GM12878 (cell line): ENCODE measurements at regions of chr18 and their contacts with region 1.

Region 1: DNA sequence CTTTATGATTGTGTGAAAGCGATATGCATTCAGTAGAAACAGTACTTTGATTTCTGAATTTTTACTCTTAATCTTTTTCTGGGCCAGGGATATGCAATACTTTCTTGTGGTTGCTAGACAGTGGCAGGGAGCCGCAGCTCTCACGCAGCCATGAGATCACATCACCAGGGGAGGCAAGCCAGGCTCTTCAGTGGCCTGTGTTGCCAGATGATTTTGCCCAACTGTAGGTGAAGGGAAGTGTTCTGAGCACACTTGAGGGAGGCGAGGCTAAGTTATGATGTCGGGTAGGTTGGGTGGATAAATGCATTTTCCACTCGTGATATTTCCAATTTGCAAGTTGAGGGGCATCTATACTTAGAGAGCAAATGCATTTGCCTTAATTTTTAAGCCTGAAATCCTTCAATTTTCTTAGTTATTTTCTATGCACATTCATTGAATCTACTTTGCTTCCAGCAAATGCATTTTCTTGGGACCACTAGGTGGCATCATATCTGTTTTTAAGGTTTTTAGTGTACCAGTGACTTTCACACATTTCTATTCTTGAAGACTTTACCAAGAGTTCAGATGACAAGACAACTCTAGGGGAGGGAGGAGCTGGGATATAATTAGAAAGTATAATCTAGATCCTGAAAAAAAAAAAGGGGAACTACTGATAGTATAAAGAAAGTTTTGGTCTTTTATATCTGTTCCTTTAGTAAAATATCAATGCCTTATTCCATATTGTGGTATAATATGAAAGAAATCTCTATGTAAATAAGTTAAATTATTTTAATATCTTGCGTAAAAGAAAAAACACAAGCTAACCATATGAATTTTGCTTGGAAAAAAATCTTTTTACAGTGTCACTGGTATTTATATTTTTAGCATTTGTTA is 643.3 kb downstream of the SOCS6 start:
- DNase-seq: no peak
- ATAC-seq: peak; percentile 47; the same call in 1 of the 3 replicates
- H3K4me3 ChIP-seq: no peak overlapping the region
- H3K27ac ChIP-seq: no peak overlapping the region
- H3K4me1 ChIP-seq: no peaks in the 10 kb centered on the region
- H3K27me3 ChIP-seq: no peaks in the 10 kb centered on the region
- CTCF ChIP-seq: peak; percentile 27 to 55 (median 52); a peak in 5 of 6 replicates
- EP300 ChIP-seq: no peak
- POLR2A ChIP-seq: no peak
- RAD21 ChIP-seq: peak; percentile 60

Region 2: DNA sequence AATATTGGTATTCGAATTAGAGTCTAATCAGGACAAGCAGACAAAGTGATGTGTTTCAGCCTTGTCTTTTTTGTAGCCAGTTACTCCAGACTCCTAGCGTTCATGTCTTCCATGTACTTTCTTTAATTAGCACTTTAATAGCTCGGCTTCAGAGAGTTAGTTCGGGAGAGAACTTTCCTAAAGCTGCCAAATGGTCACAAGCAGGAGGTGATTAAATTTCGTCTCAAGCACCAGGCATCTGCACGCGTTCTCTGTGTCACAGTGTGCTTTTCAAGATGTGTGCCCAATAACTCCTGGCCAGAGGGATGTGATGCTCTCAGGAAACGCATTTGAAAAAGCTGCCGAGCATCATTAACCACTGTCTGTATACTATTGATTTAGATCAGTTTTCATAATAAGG is 147.4 kb after region 1 on chr18:
- CTCF ChIA-PET with region 1: no interaction called
- POLR2A ChIA-PET with region 1: no interaction called
- RAD21 ChIA-PET with region 1: no interaction called
- SMC1A ChIA-PET with region 1: no interaction called
- in situ Hi-C with region 1: no loop called
- intact Hi-C with region 1: loop called (anchors 5 kb)
- DNase-seq: no peak
- ATAC-seq: no peak
- H3K4me3 ChIP-seq: no peak overlapping the region
- H3K27ac ChIP-seq: no peak overlapping the region
- H3K4me1 ChIP-seq: no peaks in the 10 kb centered on the region
- H3K27me3 ChIP-seq: no peaks in the 10 kb centered on the region
- CTCF ChIP-seq: no peak
- EP300 ChIP-seq: no peak
- POLR2A ChIP-seq: no peak
- RAD21 ChIP-seq: no peak

Region 3: DNA sequence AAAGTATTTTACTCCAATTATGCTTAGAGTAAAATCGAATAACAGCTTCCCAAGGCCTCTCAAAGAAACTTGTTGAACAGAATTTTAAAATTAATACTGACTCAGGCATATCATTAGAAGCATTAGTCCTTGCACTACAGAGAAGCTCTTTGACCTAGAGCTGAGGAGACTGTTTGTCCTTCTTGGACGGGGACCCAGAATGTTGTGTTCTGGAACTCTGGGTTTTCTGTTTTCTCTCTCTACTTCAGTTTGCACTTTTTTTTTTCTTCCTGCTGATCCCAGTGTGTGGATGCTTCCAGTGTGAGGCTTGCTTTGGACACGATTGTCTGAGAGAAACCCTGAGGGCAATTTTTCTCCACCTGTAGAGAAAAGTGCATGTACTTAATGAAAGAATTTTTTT is 204.3 kb after region 1 on chr18:
- CTCF ChIA-PET with region 1: no interaction called
- POLR2A ChIA-PET with region 1: no interaction called
- RAD21 ChIA-PET with region 1: no interaction called
- SMC1A ChIA-PET with region 1: no interaction called
- in situ Hi-C with region 1: no loop called
- intact Hi-C with region 1: loop called (anchors 10 kb)
- DNase-seq: no peak
- ATAC-seq: no peak
- H3K4me3 ChIP-seq: no peak overlapping the region
- H3K27ac ChIP-seq: no peak overlapping the region
- H3K4me1 ChIP-seq: no peaks in the 10 kb centered on the region
- H3K27me3 ChIP-seq: no peaks in the 10 kb centered on the region
- CTCF ChIP-seq: no peak
- EP300 ChIP-seq: no peak
- POLR2A ChIP-seq: no peak
- RAD21 ChIP-seq: no peak

Region 4: DNA sequence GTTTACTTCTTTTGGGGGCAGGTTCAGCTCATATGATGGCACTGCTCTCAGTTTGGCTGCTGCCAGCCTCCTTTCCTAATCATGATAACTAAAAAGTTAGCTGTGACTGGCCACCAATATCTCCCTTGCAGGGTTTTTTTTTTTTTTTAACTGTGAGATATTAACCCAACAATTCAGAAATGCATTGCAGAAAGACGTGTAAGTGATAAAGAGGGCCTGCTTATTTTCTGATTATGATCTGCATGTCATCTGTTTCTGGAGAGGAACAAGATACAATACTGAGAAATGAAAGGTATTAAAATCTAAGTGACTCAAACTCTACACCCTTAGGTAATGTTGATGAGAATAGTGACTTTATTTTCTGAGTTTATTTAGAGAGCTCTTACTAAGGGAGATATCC is 262.3 kb after region 1 on chr18:
- CTCF ChIA-PET with region 1: no interaction called
- POLR2A ChIA-PET with region 1: no interaction called
- RAD21 ChIA-PET with region 1: no interaction called
- SMC1A ChIA-PET with region 1: no interaction called
- in situ Hi-C with region 1: no loop called
- intact Hi-C with region 1: loop called (anchors 10 kb)
- DNase-seq: no peak
- ATAC-seq: no peak
- H3K4me3 ChIP-seq: no peak overlapping the region
- H3K27ac ChIP-seq: no peak overlapping the region
- H3K4me1 ChIP-seq: no peaks in the 10 kb centered on the region
- H3K27me3 ChIP-seq: no peaks in the 10 kb centered on the region
- CTCF ChIP-seq: no peak
- EP300 ChIP-seq: no peak
- POLR2A ChIP-seq: no peak
- RAD21 ChIP-seq: no peak

Region 5: GRCh38 chr18:71242981-71243380 is 310.8 kb after region 1 on chr18:
- CTCF ChIA-PET with region 1: no interaction called
- POLR2A ChIA-PET with region 1: no interaction called
- RAD21 ChIA-PET with region 1: no interaction called
- SMC1A ChIA-PET with region 1: no interaction called
- in situ Hi-C with region 1: no loop called
- intact Hi-C with region 1: loop called (anchors 5 kb)
- DNase-seq: no peak
- ATAC-seq: no peak
- H3K4me3 ChIP-seq: no peak overlapping the region
- H3K27ac ChIP-seq: no peak overlapping the region
- H3K4me1 ChIP-seq: no peaks in the 10 kb centered on the region
- H3K27me3 ChIP-seq: no peaks in the 10 kb centered on the region
- CTCF ChIP-seq: no peak
- EP300 ChIP-seq: no peak
- POLR2A ChIP-seq: no peak
- RAD21 ChIP-seq: no peak

Region 6: GRCh38 chr18:72544092-72544886 is 1612.1 kb after region 1 on chr18 and contains the start of gene CBLN2:
- CTCF ChIA-PET with region 1: interaction called, 5 read pairs
- POLR2A ChIA-PET with region 1: no interaction called
- RAD21 ChIA-PET with region 1: interaction called, 4 read pairs
- SMC1A ChIA-PET with region 1: interaction called, 5 read pairs
- in situ Hi-C with region 1: loop called (anchors 10 kb)
- intact Hi-C with region 1: loop called (anchors 5 kb)
- DNase-seq: no peak
- ATAC-seq: peak; percentile 97
- H3K4me3 ChIP-seq: no peak within 1 kb of the TSS
- H3K27ac ChIP-seq: no peak within 1 kb of the TSS
- H3K4me1 ChIP-seq: no peaks in the 10 kb centered on the region
- H3K27me3 ChIP-seq: peaks cover 0 to 3% of the 10 kb centered on the region in 2 experiments; a peak in 2 of 4 replicates
- CTCF ChIP-seq: peak; percentile 54 to 80 (median 76)
- EP300 ChIP-seq: no peak
- POLR2A ChIP-seq: no peak
- RAD21 ChIP-seq: peak; percentile 76
- polyA plus RNA-seq, gene CBLN2: 0.11 TPM in 1 of 2 experiments, not detected in the other